ENCODE measurements at regions of chr2 and their contacts with region 1.

Region 1: GRCh38 chr2:150487537-150488429 is at the start of gene RND3:
- DNase-seq: peak; percentile 99
- H3K4me3 ChIP-seq: peak within 1 kb of the TSS; percentile 92
- H3K27ac ChIP-seq: peak within 1 kb of the TSS; percentile 95
- H3K4me1 ChIP-seq: peaks cover 42% of the 10 kb centered on the region
- H3K27me3 ChIP-seq: no peaks in the 10 kb centered on the region
- total RNA-seq, gene RND3: 244 and 271 TPM in 2 replicates

Region 2: DNA sequence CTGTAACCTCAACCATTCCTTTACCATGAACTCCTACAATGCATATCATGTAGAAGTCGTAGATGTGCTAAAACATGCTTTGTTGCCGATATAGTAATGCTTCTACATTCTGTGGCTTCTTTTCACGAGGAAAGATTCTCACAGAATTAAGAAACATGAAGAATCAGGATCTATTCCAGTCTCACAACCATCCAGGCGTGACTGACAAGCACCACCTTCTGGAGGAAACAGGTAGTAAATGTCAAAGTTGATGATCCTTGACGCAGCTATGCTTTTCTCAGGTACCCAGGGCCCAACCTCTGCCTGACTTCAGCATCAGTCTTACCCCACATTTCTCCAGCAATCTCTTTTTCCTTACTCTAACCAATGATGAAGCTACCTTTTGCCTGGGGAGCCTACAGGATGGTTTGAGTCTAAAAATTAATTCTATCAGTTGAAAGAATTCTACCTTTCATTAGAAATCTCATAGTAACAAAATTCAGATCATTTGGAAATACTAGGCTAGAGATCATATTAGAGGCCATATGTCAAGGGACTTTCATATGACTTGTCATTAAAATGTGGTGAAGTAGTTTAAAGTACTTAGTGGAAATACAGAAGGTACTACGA is 123.0 kb after region 1 on chr2:
- in situ Hi-C with region 1: loop called (anchors 5 kb)
- DNase-seq: peak; percentile 74
- H3K4me3 ChIP-seq: peak overlapping the region; percentile 19
- H3K27ac ChIP-seq: peak overlapping the region; percentile 60
- H3K4me1 ChIP-seq: peaks cover 55% of the 10 kb centered on the region
- H3K27me3 ChIP-seq: no peaks in the 10 kb centered on the region

Region 3: DNA sequence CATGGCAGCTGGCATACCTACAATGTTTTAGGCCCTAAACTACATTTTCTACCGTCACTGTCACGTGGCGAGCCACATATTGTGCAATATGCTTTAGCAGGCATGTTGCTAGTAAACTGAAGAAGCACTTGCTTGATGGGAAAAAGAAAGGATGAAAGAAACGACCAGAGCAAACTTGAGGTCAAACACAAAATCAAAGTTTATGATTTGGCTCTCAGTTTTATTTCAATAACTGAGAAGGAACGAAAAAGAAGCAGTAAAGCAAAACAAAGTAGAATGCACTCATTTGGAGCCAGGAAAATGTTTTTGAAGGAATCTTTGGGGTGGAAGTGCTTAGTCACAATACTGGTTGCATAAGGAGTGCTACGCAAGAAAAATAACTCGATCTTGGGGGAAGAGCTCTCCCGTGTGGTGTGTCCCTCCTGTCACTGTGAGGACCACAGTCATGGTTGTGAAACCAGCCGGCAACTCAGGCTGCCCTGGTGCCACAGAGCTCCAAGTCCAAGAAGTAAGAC is 424.0 kb after region 1 on chr2:
- in situ Hi-C with region 1: loop called (anchors 25 kb)
- DNase-seq: peak; percentile 94
- H3K4me3 ChIP-seq: peak overlapping the region; percentile 62
- H3K27ac ChIP-seq: peak overlapping the region; percentile 90
- H3K4me1 ChIP-seq: peaks cover 16% of the 10 kb centered on the region
- H3K27me3 ChIP-seq: no peaks in the 10 kb centered on the region

Region 4: DNA sequence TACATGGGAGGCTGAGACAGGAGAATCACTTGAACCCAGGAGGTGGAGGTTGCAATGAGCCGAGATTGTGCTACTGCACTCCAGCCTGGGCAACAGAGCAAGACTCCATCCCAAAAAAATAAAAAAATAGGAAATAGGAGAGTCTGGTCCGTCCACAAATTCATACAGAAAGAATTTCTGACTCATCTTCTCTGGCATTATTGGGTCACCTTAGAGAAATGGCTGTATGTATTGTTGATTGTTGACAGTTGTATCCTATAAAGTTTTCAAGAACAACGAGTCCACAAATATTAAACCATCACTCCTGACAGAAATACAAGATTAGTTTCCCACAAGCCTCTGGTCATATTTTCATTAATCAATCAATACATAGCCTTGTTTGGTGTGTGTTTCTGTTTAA is 753.4 kb after region 1 on chr2:
- in situ Hi-C with region 1: loop called (anchors 10 kb)
- DNase-seq: peak; percentile 70
- H3K4me3 ChIP-seq: no peak overlapping the region
- H3K27ac ChIP-seq: no peak overlapping the region
- H3K4me1 ChIP-seq: peaks cover 26% of the 10 kb centered on the region
- H3K27me3 ChIP-seq: no peaks in the 10 kb centered on the region

Region 5: DNA sequence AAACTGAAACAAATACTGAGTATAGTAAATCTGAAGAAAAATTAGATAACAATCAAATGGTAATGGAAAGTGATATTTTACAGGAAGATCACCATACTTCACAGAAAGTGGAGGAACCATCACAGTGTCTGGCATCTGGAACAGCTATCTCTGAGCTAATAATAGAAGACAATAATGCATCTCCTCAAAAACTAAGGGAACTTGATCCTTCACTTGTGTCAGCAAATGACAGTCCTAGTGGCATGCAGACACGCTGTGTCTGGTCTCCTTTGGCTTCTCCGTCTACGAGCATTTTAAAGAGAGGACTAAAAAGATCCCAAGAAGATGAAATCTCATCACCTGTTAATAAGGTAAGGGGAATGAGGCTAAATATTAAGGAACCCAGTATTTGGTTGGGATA is 978.0 kb after region 1 on chr2:
- in situ Hi-C with region 1: no loop called
- DNase-seq: no peak
- H3K4me3 ChIP-seq: no peak overlapping the region
- H3K27ac ChIP-seq: no peak overlapping the region
- H3K4me1 ChIP-seq: no peaks in the 10 kb centered on the region
- H3K27me3 ChIP-seq: no peaks in the 10 kb centered on the region